Transverse colon (tissue), 4 donors: ENCODE measurements at regions of chr3 and their contacts with region 1.

Region 1: GRCh38 chr3:50227390-50228183 is 8.4 kb upstream of the GNAI2 start:
- DNase-seq: peak; percentile 94
- H3K4me3 ChIP-seq: peak overlapping the region; percentile 49 to 80 (median 56)
- H3K27ac ChIP-seq: peak overlapping the region; percentile 80 to 88 (median 85)
- H3K4me1 ChIP-seq: peaks cover 4 to 23% (median 16%) of the 10 kb centered on the region in 4 donors
- H3K27me3 ChIP-seq: peaks cover 7% of the 10 kb centered on the region
- CTCF ChIP-seq: peak; percentile 57 to 96 (median 86)
- EP300 ChIP-seq: no peak
- POLR2A ChIP-seq: peak; percentile 57

Region 2: DNA sequence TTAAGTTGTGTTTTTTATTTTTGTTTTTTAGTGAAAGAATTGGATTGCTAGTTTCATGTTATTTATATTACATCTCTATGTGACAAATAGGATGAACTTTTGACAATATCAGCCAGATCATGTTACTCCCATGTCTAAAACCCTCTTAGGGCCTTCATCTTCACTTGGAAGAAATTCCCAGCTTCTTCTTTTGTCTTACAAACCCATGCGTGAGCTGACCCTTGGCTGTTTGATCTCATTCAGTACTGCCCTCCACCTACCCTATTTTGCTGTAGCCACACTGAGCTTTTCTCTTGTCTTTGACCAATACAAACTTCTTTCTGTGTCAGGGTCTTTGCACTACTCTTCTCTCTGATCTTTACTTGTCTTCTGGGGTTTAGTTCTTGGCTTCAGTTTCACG is 250.6 kb before region 1 on chr3:
- in situ Hi-C with region 1: no loop called
- intact Hi-C with region 1: no loop called
- DNase-seq: no peak
- H3K4me3 ChIP-seq: no peak overlapping the region
- H3K27ac ChIP-seq: no peak overlapping the region
- H3K4me1 ChIP-seq: no peaks in the 10 kb centered on the region
- H3K27me3 ChIP-seq: no peaks in the 10 kb centered on the region
- CTCF ChIP-seq: no peak
- EP300 ChIP-seq: no peak
- POLR2A ChIP-seq: no peak

Region 3: GRCh38 chr3:50100956-50101845 is 126.4 kb before region 1 on chr3:
- in situ Hi-C with region 1: no loop called
- intact Hi-C with region 1: no loop called
- DNase-seq: no peak
- H3K4me3 ChIP-seq: no peak overlapping the region
- H3K27ac ChIP-seq: no peak overlapping the region
- H3K4me1 ChIP-seq: no peaks in the 10 kb centered on the region
- H3K27me3 ChIP-seq: no peaks in the 10 kb centered on the region
- CTCF ChIP-seq: no peak
- EP300 ChIP-seq: no peak
- POLR2A ChIP-seq: no peak

Region 4: DNA sequence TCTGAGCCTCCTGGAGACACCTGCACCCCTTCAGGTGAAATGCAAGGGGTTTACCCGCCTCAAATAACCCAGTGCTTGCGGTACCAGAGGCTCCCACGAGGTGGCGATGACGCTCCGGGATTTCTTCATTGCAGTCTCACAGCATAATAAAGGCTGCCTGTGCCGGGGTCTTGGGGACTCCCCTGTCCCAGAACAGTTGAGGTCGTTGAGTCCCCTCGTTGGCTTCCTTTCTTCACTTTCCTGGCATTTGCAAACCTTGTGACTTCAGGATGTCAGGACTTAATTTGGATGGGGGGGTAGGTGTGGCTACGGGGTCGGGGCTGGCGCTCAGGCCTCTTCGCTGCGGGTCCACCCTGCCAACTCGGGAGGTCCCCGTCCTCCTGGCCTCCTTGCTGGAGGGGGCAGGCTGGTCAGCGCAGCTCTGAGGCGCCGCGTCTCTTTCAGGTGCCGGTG is 34.9 kb before region 1 on chr3:
- in situ Hi-C with region 1: loop called in 1 of 4 experiments (anchors 5 kb)
- intact Hi-C with region 1: loop called (anchors 2 kb)
- DNase-seq: peak; percentile 78
- H3K4me3 ChIP-seq: no peak overlapping the region
- H3K27ac ChIP-seq: no peak overlapping the region
- H3K4me1 ChIP-seq: peaks cover 0 to 20% (median 15%) of the 10 kb centered on the region in 4 donors
- H3K27me3 ChIP-seq: peaks cover 40% of the 10 kb centered on the region
- CTCF ChIP-seq: peak; percentile 93 to 96 (median 93)
- EP300 ChIP-seq: no peak
- POLR2A ChIP-seq: no peak

Region 5: GRCh38 chr3:50245831-50246516 is 18.4 kb after region 1 on chr3:
- in situ Hi-C with region 1: no loop called
- intact Hi-C with region 1: loop called (anchors 2 kb)
- DNase-seq: peak; percentile 95
- H3K4me3 ChIP-seq: peak overlapping the region; percentile 17 to 48 (median 36)
- H3K27ac ChIP-seq: peak overlapping the region; percentile 67 to 85 (median 82)
- H3K4me1 ChIP-seq: peaks cover 52 to 96% (median 57%) of the 10 kb centered on the region in 4 donors
- H3K27me3 ChIP-seq: no peaks in the 10 kb centered on the region
- CTCF ChIP-seq: peak; percentile 97 to 99 (median 99)
- EP300 ChIP-seq: no peak
- POLR2A ChIP-seq: no peak

Region 6: GRCh38 chr3:50260027-50260941 is 32.7 kb after region 1 on chr3:
- in situ Hi-C with region 1: no loop called
- intact Hi-C with region 1: loop called (anchors 5 kb)
- DNase-seq: peak; percentile 95
- H3K4me3 ChIP-seq: peak overlapping the region; percentile 45 to 65 (median 54)
- H3K27ac ChIP-seq: peak overlapping the region; percentile 94 to 97 (median 96)
- H3K4me1 ChIP-seq: peaks cover 16 to 44% (median 26%) of the 10 kb centered on the region in 4 donors
- H3K27me3 ChIP-seq: no peaks in the 10 kb centered on the region
- CTCF ChIP-seq: peak; percentile 89 to 100 (median 99)
- EP300 ChIP-seq: no peak
- POLR2A ChIP-seq: peak; percentile 68

Region 7: DNA sequence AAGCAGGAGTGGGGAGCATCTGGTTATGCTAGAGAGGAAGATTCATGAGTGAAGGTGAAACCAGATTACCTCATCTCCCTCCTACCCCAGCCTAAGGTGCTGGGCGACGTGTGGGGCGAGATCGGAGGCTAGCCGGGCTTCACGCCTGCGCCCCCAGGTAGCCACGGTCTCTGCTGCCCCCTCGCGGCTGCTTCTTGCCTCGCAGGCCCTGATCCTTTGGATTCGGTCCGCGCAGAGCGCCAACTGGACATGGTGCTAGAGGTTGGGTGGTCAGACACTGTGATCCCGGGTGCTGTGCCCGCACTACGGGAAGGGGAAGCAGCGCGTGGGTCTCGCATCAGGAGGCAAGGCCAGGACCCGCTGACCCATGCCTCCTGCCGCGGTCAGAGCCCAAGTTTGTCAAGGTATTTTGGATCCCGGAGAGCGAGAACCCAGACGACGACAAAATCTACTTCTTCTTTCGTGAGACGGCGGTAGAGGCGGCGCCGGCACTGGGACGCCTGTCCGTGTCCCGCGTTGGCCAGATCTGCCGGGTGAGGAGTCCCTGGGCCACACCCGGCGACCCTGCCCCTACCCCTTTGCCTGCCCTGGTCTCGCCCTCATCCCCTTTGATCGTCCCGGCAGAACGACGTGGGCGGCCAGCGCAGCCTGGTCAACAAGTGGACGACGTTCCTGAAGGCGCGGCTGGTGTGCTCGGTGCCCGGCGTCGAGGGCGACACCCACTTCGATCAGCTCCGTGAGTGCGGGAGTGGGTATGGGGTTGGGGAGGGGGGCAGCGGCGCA is 45.5 kb after region 1 on chr3:
- in situ Hi-C with region 1: no loop called
- intact Hi-C with region 1: loop called (anchors 2 kb)
- DNase-seq: peak; percentile 92
- H3K4me3 ChIP-seq: peak overlapping the region in 2 of 4 donors; percentile 35 to 40
- H3K27ac ChIP-seq: peak overlapping the region in 3 of 4 donors; percentile 4 to 33 (median 23)
- H3K4me1 ChIP-seq: peaks cover 19 to 54% (median 36%) of the 10 kb centered on the region in 4 donors
- H3K27me3 ChIP-seq: peaks cover 33% of the 10 kb centered on the region
- CTCF ChIP-seq: peak; percentile 98 to 100 (median 99)
- EP300 ChIP-seq: no peak
- POLR2A ChIP-seq: no peak